Ascending aorta (tissue), 2 donors: ENCODE measurements at regions of chr17 and their contacts with region 1.

Region 1: GRCh38 chr17:1267471-1267947 is 2.7 kb upstream of the BHLHA9 start:
- DNase-seq: peak in 1 of 2 donors; percentile 77
- H3K4me3 ChIP-seq: peak overlapping the region; percentile 74 to 75
- H3K27ac ChIP-seq: peak overlapping the region; percentile 93 to 94
- H3K4me1 ChIP-seq: peaks cover 0 to 6% of the 10 kb centered on the region in 2 donors
- H3K27me3 ChIP-seq: no peaks in the 10 kb centered on the region
- CTCF ChIP-seq: no peak

Region 2: DNA sequence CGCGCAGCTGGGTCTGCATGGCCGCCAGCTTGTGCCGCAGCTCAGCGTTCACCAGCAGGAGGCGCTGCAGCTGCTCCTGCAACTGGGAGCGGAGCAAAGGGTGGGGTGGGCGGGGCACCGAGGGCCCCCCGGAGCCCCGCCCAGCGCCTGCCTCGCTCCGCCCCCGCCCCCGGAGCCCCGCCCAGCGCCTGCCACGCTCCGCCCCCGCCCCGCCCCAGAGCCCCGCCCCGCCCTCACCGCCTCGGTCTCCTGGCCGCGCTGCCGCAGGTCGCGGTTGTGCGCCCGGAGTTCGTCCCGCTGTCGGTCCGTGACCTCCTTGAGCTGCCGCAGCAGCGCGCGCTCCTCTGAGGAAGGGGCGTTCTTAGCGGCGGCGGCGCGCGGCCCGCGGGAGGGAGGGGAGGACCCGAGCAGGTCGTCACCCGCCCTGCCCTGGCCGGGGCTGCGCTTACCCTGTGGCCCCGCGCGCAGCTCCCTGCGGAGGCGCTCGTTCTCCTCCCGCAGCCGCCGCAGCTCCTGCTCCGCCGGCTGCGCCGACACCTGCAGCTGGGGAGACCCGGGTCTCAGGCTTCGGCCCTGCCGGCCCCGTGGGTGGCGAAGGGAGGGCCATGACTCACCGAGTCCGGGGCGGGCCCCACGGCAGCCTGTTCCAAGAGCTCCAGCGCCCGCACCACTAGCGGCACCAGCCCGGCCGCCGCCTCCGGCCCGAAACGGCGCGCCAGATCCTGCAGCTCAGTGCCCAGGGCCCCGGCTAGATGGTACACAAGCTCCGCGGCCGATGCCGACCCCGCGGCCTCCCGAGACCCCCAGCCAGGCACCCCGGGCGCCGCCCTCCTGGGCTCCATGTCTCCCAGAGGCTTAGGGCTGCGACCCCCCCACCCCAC is 381.7 kb after region 1 on chr17:
- intact Hi-C with region 1: loop called (anchors 5 kb)
- DNase-seq: peak; percentile 86 to 98
- H3K4me3 ChIP-seq: peak overlapping the region; percentile 74 to 92
- H3K27ac ChIP-seq: peak overlapping the region; percentile 94 to 99
- H3K4me1 ChIP-seq: peaks cover 4 to 22% of the 10 kb centered on the region in 2 donors
- H3K27me3 ChIP-seq: no peaks in the 10 kb centered on the region
- CTCF ChIP-seq: peak in 2 of 3 experiments; percentile 94 to 97